Naive thymus-derived CD4-positive, alpha-beta T cell (primary cell): ENCODE measurements at regions of chr6 and their contacts with region 1.

Region 1: GRCh38 chr6:474453-475185 is 83.1 kb downstream of the IRF4 start:
- DNase-seq: peak; percentile 25 to 75 (median 72)
- ATAC-seq: peak; percentile 95
- H3K4me3 ChIP-seq: peak overlapping the region; percentile 36
- H3K4me3 Mint-ChIP-seq: peak overlapping the region; percentile 9 to 82 (median 72)
- H3K27ac ChIP-seq: peak overlapping the region; percentile 47
- H3K27ac Mint-ChIP-seq: peak overlapping the region; percentile 7 to 83 (median 60)
- H3K4me1 ChIP-seq: peaks cover 14 to 22% of the 10 kb centered on the region in 2 donors
- H3K4me1 Mint-ChIP-seq: peaks cover 25 to 76% (median 58%) of the 10 kb centered on the region in 7 donors
- H3K27me3 ChIP-seq: no peaks in the 10 kb centered on the region
- H3K27me3 Mint-ChIP-seq: no peaks in the 10 kb centered on the region

Region 2: DNA sequence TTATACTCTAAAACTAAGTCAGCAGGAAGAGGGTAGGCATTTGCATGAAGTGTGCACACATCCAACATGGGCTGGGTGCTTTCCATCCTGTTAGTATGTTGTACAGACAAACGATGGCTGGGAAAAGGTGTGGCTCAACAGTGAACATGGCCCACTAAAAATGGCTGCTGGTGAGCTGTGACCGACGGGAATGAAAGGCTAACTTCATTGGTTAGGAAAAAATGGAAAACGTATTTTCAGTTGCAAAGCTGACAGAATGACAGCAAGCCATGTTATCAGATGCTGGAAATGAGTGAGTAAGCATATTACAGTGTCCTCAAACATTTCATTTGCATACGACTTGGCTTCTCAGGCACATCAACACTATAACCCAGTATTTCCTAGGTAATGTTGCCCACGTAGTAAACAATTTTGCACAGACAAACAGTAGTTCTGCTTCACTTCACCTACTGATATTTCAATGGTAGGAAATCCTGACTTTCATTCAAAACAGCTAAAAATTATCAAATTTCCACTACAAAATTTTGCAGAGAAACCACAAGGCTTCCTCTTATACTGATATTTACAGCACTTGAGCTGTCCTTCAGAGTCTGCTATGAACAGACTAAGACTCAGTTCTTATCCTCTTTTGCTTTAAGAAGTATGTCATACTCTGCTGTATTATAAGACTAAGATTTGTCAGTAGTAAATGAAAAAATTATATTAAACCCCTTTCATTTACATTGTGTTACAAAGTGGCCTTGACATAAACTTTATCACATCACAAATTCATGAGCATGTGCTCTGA is 15.8 kb after region 1 on chr6:
- CTCF ChIA-PET with region 1: interaction called, 4 read pairs
- POLR2A ChIA-PET with region 1: interaction called, 23 read pairs
- intact Hi-C with region 1: loop called in 1 of 2 experiments (anchors 1 kb)
- DNase-seq: no peak
- ATAC-seq: peak; percentile 47
- H3K4me3 ChIP-seq: peak overlapping the region; percentile 25
- H3K4me3 Mint-ChIP-seq: peak overlapping the region; percentile 19 to 87 (median 70)
- H3K27ac ChIP-seq: no peak overlapping the region
- H3K27ac Mint-ChIP-seq: peak overlapping the region; percentile 54 to 98 (median 84)
- H3K4me1 ChIP-seq: peaks cover 60 to 65% of the 10 kb centered on the region in 2 donors
- H3K4me1 Mint-ChIP-seq: peaks cover 46 to 78% (median 70%) of the 10 kb centered on the region in 7 donors
- H3K27me3 ChIP-seq: no peaks in the 10 kb centered on the region
- H3K27me3 Mint-ChIP-seq: no peaks in the 10 kb centered on the region

Region 3: DNA sequence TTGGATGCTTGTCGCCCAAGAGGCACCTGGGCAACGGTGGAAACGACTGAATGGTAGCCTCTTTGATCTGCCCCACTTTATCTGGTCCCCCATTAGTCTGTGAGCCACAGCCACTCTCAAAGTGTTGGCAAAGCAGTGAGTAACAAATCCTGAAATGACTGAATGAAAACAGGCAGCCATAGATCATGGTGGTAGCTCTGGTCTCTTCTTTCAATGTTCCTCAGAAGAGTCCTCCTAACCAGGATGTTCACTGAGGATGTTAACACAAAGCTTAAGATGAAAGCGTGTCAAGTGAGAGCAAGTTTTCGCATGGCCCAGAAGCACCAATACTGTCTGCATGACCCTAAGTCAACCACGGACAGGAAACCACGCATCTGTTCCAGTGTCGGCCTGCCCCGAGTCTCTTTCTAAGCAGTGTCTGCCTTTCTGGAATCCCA is 24.2 kb after region 1 on chr6:
- CTCF ChIA-PET with region 1: no interaction called
- POLR2A ChIA-PET with region 1: interaction called, 7 read pairs
- intact Hi-C with region 1: loop called in 1 of 2 experiments (anchors 1 kb)
- DNase-seq: peak in 2 of 9 donors; percentile 25 to 57
- ATAC-seq: peak; percentile 68
- H3K4me3 ChIP-seq: no peak overlapping the region
- H3K4me3 Mint-ChIP-seq: peak overlapping the region in 9 of 10 donors; percentile 50 to 86 (median 78)
- H3K27ac ChIP-seq: peak overlapping the region; percentile 40
- H3K27ac Mint-ChIP-seq: peak overlapping the region; percentile 46 to 95 (median 75)
- H3K4me1 ChIP-seq: peaks cover 35 to 38% of the 10 kb centered on the region in 2 donors
- H3K4me1 Mint-ChIP-seq: peaks cover 33 to 83% (median 69%) of the 10 kb centered on the region in 7 donors
- H3K27me3 ChIP-seq: no peaks in the 10 kb centered on the region
- H3K27me3 Mint-ChIP-seq: no peaks in the 10 kb centered on the region

Region 4: GRCh38 chr6:1103945-1104623 is 629.5 kb after region 1 on chr6:
- CTCF ChIA-PET with region 1: no interaction called
- POLR2A ChIA-PET with region 1: no interaction called
- intact Hi-C with region 1: no loop called
- DNase-seq: no peak
- ATAC-seq: no peak
- H3K4me3 ChIP-seq: no peak overlapping the region
- H3K4me3 Mint-ChIP-seq: no peak overlapping the region
- H3K27ac ChIP-seq: no peak overlapping the region
- H3K27ac Mint-ChIP-seq: no peak overlapping the region
- H3K4me1 ChIP-seq: no peaks in the 10 kb centered on the region
- H3K4me1 Mint-ChIP-seq: no peaks in the 10 kb centered on the region
- H3K27me3 ChIP-seq: no peaks in the 10 kb centered on the region
- H3K27me3 Mint-ChIP-seq: peaks cover 7 to 66% (median 39%) of the 10 kb centered on the region in 5 donors